PC-9 (cell line): ENCODE measurements at regions of chr10 and their contacts with region 1.

Region 1: GRCh38 chr10:102352066-102352715 is 43.3 kb upstream of the NFKB2 start:
- DNase-seq: peak in 1 of 2 experiments; percentile 41
- H3K4me3 ChIP-seq: no peak overlapping the region
- H3K27ac ChIP-seq: no peak overlapping the region
- H3K4me1 ChIP-seq: no peaks in the 10 kb centered on the region
- H3K27me3 ChIP-seq: no peaks in the 10 kb centered on the region
- CTCF ChIP-seq: peak; percentile 87

Region 2: DNA sequence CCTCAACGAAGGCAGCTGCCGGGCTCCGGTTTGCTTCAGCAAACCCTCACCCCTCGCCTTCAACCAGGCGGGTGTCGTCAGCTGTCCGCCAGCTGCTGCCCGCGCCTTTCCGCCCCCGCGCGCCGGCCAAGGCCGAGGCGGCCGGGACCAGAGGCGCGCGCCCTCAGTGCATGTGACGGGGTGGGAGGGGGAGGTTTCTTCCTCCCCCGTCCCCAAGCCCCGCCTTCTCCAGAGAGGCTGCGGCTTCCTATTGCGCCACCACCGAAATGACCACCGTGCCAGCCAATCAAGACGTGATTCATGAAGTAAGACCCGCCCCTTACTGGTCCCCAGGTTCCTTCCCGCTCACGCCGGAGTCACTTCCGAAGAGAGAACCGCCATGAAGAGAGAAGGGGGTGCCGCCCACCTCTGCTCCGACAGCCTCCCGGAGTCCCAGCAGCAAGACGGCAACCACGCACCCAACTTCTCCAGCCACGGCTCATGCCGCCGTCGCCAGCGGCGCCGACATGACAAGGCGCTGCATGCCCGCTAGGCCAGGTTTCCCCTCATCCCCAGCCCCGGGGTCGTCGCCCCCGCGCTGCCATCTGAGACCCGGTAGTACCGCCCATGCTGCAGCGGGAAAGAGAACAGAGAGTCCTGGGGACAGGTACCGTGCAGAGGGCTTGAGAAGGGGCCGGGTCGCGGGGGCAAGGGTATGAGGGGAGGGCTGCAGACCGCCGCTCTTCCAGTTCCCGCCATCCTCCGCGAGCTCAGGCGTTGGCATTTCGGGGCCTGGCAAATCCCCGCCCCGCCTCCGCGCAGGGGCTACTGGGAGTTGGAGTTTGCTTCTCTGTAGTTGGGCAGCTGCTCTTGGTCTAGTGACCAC is 1439.4 kb before region 1 on chr10 and contains the start of gene SLF2:
- CTCF ChIA-PET with region 1: no interaction called
- POLR2A ChIA-PET with region 1: no interaction called
- intact Hi-C with region 1: no loop called
- DNase-seq: peak; percentile 89 to 91
- H3K4me3 ChIP-seq: peak within 1 kb of the TSS; percentile 89
- H3K27ac ChIP-seq: no peak within 1 kb of the TSS
- H3K4me1 ChIP-seq: peaks cover 12% of the 10 kb centered on the region
- H3K27me3 ChIP-seq: no peaks in the 10 kb centered on the region
- CTCF ChIP-seq: no peak
- total RNA-seq, gene SLF2: 13.6 and 17.1 TPM in 2 replicates

Region 3: DNA sequence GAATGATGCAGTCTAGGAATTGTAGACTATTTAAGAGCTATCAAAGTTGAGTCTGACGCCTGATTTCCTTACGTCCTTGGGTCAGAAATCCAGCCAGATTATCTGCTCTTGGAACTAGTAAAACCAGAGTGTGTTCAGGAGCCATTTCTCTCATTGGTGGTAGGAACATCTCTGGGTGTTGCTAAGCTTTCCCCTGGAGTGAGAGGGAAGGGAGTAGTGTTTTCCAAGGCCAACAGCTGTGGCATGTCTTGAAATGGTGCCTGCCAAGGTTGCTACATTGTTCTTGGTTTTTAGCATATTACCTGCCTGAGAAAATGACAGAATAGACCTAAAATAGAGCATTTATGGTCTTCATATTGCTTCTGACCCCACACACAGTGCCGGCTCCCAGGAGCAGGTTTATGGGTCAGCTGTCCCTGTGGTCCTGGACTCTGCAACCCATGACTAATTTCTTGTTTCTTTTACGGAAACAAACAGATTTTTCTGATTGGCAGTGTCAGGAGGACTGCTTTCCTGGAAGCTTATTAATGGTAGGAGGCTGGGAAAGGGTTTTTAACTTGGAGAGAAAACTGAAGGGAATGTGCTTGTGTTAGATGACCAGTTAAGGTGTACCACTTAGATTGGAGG is 89.3 kb before region 1 on chr10:
- CTCF ChIA-PET with region 1: no interaction called
- POLR2A ChIA-PET with region 1: interaction called, 47 read pairs
- intact Hi-C with region 1: no loop called
- DNase-seq: no peak
- H3K4me3 ChIP-seq: no peak overlapping the region
- H3K27ac ChIP-seq: no peak overlapping the region
- H3K4me1 ChIP-seq: no peaks in the 10 kb centered on the region
- H3K27me3 ChIP-seq: no peaks in the 10 kb centered on the region
- CTCF ChIP-seq: no peak